Heart right ventricle (tissue), 16 donors: ENCODE measurements at regions of chr2 and their contacts with region 1.

Region 1: GRCh38 chr2:191789796-191790195 is 57.1 kb downstream of the CAVIN2 start:
- DNase-seq: no peak
- ATAC-seq: no peak
- H3K4me3 ChIP-seq: no peak overlapping the region
- H3K27ac ChIP-seq: no peak overlapping the region
- H3K4me1 ChIP-seq: no peaks in the 10 kb centered on the region
- H3K27me3 ChIP-seq: peaks cover 0 to 17% (median 0%) of the 10 kb centered on the region in 7 donors
- CTCF ChIP-seq: no peak

Region 2: GRCh38 chr2:191566344-191566743 is 223.5 kb before region 1 on chr2:
- intact Hi-C with region 1: loop called in 1 of 10 experiments (anchors 10 kb)
- DNase-seq: peak in 1 of 2 donors; percentile 47
- ATAC-seq: peak in 6 of 8 donors; percentile 52 to 75 (median 62)
- H3K4me3 ChIP-seq: no peak overlapping the region
- H3K27ac ChIP-seq: no peak overlapping the region
- H3K4me1 ChIP-seq: peaks cover 0 to 23% (median 0%) of the 10 kb centered on the region in 9 donors
- H3K27me3 ChIP-seq: peaks cover 0 to 32% (median 14%) of the 10 kb centered on the region in 7 donors
- CTCF ChIP-seq: peak; percentile 32 to 81 (median 74)

Region 3: GRCh38 chr2:191942090-191942738 is 152.4 kb after region 1 on chr2:
- intact Hi-C with region 1: no loop called
- DNase-seq: no peak
- ATAC-seq: peak in 2 of 8 donors; percentile 37 to 39
- H3K4me3 ChIP-seq: no peak overlapping the region
- H3K27ac ChIP-seq: no peak overlapping the region
- H3K4me1 ChIP-seq: peaks cover 0 to 15% (median 6%) of the 10 kb centered on the region in 9 donors
- H3K27me3 ChIP-seq: no peaks in the 10 kb centered on the region
- CTCF ChIP-seq: no peak